Aorta (tissue), 5 donors: ENCODE measurements at regions of chr19 and their contacts with region 1.

Region 1: DNA sequence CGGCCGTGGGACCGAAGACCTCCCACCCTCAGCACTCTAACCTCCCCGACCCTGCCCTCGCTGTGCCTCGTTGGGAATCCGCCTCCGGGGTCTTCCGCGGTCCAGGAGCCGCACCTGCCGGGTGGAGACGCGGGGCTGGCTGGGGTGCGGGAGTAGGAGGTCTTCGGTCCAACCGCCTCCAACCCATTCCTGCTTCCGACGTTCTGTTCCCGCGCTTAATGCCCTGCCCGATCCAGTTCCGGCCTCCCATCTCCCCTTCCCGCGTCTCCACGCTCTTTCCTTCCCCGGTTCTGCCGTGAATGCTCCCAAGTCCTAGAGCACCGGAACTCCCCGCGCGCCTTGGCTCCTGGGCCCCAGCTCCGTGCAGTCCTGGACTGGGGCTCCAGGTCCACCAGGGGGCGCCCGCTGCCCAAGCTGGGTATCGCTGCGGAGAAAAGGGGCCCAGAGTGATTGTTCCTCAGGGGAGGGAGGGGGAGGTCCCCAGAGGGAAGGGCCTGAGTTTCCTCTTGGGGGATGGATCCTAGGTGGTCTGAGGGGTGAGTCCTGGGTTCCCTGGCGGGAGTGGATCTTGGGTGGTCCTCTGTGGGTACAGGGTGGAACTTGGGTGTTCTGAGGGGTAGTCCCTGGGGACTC is 14.1 kb upstream of the TNFSF9 start:
- DNase-seq: peak; percentile 94 to 97
- ATAC-seq: peak; percentile 94
- H3K4me3 ChIP-seq: peak overlapping the region; percentile 0 to 8
- H3K27ac ChIP-seq: no peak overlapping the region
- H3K4me1 ChIP-seq: no peaks in the 10 kb centered on the region
- H3K27me3 ChIP-seq: no peaks in the 10 kb centered on the region

Region 2: GRCh38 chr19:6632002-6632621 is 115.3 kb after region 1 on chr19:
- intact Hi-C with region 1: loop called in 1 of 2 experiments (anchors 5 kb)
- DNase-seq: no peak
- ATAC-seq: peak; percentile 79
- H3K4me3 ChIP-seq: no peak overlapping the region
- H3K27ac ChIP-seq: no peak overlapping the region
- H3K4me1 ChIP-seq: no peaks in the 10 kb centered on the region
- H3K27me3 ChIP-seq: no peaks in the 10 kb centered on the region

Region 3: GRCh38 chr19:6862673-6863078 is 345.9 kb after region 1 on chr19:
- intact Hi-C with region 1: loop called in 1 of 2 experiments (anchors 5 kb)
- DNase-seq: peak; percentile 89 to 92
- ATAC-seq: peak; percentile 93
- H3K4me3 ChIP-seq: no peak overlapping the region
- H3K27ac ChIP-seq: no peak overlapping the region
- H3K4me1 ChIP-seq: no peaks in the 10 kb centered on the region
- H3K27me3 ChIP-seq: no peaks in the 10 kb centered on the region